Activated CD4-positive, alpha-beta T cell treated with anti-CD3 and anti-CD28 coated beads for 36 hours (primary cell): ENCODE measurements at regions of chr22 and their contacts with region 1.

Region 1: GRCh38 chr22:31970490-31971444 is 26.4 kb downstream of the YWHAH start:
- DNase-seq: peak; percentile 93
- ATAC-seq: peak; percentile 95
- H3K4me3 Mint-ChIP-seq: peak overlapping the region; percentile 57
- H3K27ac Mint-ChIP-seq: peak overlapping the region; percentile 37
- H3K4me1 Mint-ChIP-seq: peaks cover 11% of the 10 kb centered on the region
- H3K27me3 Mint-ChIP-seq: no peaks in the 10 kb centered on the region

Region 2: DNA sequence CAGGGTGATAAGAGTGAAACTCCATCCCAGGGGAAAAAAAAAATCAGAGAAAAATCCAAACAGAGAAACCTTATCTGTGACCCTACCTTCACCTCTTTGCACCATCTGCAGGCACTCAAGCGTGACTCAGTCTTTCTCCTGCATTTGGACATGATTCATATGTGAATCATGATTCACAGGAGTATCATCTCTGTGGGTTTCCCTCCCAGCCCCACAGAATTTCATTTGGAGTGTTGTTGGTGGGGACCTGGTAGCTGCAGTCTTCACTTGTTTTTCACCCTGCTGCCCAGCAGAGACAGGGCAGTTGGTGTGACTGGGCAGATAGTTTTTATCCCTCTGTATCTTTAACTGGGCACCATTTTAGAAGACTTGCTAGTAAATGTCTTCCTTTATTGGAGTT is 141.3 kb before region 1 on chr22:
- CTCF ChIA-PET with region 1: interaction called, 6 read pairs
- POLR2A ChIA-PET with region 1: no interaction called
- intact Hi-C with region 1: loop called in 1 of 2 experiments (anchors 1 kb)
- DNase-seq: peak; percentile 76
- ATAC-seq: peak; percentile 98
- H3K4me3 Mint-ChIP-seq: peak overlapping the region; percentile 4
- H3K27ac Mint-ChIP-seq: peak overlapping the region; percentile 88
- H3K4me1 Mint-ChIP-seq: peaks cover 31% of the 10 kb centered on the region
- H3K27me3 Mint-ChIP-seq: no peaks in the 10 kb centered on the region

Region 3: DNA sequence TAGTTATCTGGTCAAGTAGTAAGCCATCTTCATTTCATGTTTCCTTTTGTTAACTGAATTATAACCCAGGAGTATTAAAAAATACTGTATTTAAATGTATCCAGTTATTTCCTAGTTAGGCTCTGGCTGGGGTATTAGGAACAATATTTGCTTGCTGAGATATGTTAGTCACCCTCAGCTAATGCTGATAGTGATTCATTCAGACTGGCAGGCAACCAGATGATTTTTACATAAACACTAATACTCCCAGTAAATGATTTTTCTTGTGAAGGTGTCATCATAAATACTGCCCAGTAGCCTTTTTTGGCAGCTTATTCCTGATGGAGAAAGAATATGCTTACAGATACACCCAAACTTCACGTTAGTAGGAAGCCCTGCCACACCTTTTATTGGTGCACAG is 18.3 kb before region 1 on chr22:
- CTCF ChIA-PET with region 1: interaction called, 37 read pairs
- POLR2A ChIA-PET with region 1: no interaction called
- intact Hi-C with region 1: no loop called
- DNase-seq: no peak
- ATAC-seq: no peak
- H3K4me3 Mint-ChIP-seq: no peak overlapping the region
- H3K27ac Mint-ChIP-seq: no peak overlapping the region
- H3K4me1 Mint-ChIP-seq: peaks cover 67% of the 10 kb centered on the region
- H3K27me3 Mint-ChIP-seq: no peaks in the 10 kb centered on the region

Region 4: DNA sequence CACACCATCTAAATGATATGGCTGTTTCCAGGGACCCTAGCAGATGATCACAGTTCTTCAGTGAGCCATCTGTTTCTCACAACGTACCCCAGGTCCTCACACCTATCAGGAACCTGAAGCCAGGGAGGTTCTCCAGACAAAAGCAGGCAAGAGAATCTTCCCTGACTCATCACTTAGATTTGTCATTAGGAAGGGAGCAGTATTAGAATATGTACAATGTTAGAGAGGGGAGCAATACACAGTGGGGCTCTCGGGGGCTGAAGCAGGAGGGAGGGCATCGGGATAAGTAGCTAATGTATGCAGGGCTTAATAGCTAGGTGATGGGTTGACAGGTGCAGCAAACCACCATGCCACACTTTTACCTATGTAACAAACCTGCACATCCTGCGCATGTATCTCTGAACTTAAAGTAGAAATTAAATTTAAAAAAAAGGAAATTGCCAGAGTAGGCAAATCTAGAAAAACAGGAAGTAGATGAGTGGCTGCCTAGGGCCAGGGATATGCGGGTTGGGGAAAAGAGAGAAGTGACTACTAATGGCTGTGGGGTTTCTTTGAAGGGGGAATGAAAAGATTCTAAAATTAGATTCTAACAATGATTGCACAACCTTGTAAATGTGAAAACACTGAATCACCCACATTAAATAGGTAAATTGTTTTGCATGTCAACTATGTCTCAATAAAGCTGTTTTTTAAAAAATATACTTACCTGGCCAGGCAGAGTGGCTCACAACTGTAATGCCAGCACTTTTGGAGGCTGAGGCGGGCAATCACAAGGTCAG is 173.9 kb after region 1 on chr22:
- CTCF ChIA-PET with region 1: no interaction called
- POLR2A ChIA-PET with region 1: no interaction called
- intact Hi-C with region 1: loop called in 1 of 2 experiments (anchors 5 kb)
- DNase-seq: no peak
- ATAC-seq: peak; percentile 7
- H3K4me3 Mint-ChIP-seq: no peak overlapping the region
- H3K27ac Mint-ChIP-seq: no peak overlapping the region
- H3K4me1 Mint-ChIP-seq: peaks cover 38% of the 10 kb centered on the region
- H3K27me3 Mint-ChIP-seq: no peaks in the 10 kb centered on the region

Region 5: GRCh38 chr22:32426156-32426555 is 455.4 kb after region 1 on chr22:
- CTCF ChIA-PET with region 1: no interaction called
- POLR2A ChIA-PET with region 1: no interaction called
- intact Hi-C with region 1: no loop called
- DNase-seq: no peak
- ATAC-seq: no peak
- H3K4me3 Mint-ChIP-seq: no peak overlapping the region
- H3K27ac Mint-ChIP-seq: no peak overlapping the region
- H3K4me1 Mint-ChIP-seq: no peaks in the 10 kb centered on the region
- H3K27me3 Mint-ChIP-seq: peaks cover 31% of the 10 kb centered on the region

Region 6: GRCh38 chr22:32474635-32475467 is 504.1 kb after region 1 on chr22 and contains the start of gene FBXO7:
- CTCF ChIA-PET with region 1: interaction called, 4 read pairs
- POLR2A ChIA-PET with region 1: interaction called, 3 read pairs
- intact Hi-C with region 1: loop called in 1 of 2 experiments (anchors 2 kb)
- DNase-seq: peak; percentile 93
- ATAC-seq: peak; percentile 83
- H3K4me3 Mint-ChIP-seq: peak within 1 kb of the TSS; percentile 90
- H3K27ac Mint-ChIP-seq: peak within 1 kb of the TSS; percentile 98
- H3K4me1 Mint-ChIP-seq: peaks cover 21% of the 10 kb centered on the region
- H3K27me3 Mint-ChIP-seq: no peaks in the 10 kb centered on the region
- total RNA-seq, gene FBXO7: 81.3 to 85.6 TPM